GM18951 (cell line): ENCODE measurements at regions of chr1 and their contacts with region 1.

Region 1: DNA sequence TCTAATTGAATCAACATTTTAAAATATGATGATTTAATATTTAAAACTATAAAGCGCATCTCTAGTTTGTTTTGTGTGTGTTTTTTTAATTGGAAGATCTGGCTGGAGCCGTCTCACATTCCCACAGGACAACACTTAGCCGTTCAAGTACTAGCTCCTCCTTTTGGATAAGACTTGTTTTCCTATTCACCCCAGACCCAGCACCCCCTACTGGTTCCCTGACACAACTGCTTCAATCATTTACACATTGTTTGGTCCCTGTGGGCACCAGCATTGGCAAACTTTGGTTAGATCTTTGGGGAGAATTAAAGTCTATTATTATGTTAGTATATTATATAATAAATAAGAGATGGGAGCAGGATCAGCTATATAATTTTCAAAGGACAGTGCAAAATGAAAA is 34.5 kb downstream of the TYW3 start:
- POLR2A ChIP-seq: no peak

Region 2: DNA sequence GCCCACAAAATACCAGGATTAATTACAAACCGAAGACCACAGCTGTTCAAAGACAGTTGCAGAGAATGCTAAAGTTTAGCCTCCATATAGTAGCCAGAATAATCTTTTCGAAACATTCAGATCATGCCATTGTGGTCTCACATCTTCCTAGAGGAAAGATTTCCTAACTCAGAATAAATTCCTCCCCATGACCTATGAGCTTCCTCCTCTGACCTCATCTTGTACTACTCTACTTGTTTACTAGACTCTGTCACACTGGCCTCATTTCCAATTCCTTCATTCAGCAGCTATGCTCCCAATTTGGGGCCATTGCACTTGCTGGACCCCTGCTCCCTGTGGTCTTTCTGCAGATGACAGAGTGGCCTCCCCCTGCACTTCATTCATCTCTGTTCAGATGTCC is 183.3 kb before region 1 on chr1:
- in situ Hi-C with region 1: no loop called
- POLR2A ChIP-seq: no peak

Region 3: DNA sequence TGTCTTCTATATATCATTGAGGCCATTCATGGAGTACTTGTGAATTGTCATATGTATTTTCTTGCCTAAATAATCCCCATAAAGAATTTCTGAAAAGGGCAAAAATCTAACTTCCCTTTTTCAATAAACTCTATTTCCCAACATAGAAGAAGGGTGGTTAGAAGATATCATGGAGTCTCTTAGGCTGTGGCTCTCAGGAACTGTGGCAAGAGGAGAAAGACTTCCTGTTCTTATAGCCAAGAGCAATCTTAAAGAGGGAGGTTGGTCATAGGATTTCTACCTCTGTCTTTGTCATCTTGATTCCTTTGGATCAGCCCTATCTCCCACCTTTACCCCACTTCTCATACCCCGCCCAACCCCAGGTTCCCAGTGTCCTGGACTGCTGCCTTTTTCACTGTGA is 141.3 kb after region 1 on chr1:
- in situ Hi-C with region 1: no loop called
- POLR2A ChIP-seq: no peak

Region 4: DNA sequence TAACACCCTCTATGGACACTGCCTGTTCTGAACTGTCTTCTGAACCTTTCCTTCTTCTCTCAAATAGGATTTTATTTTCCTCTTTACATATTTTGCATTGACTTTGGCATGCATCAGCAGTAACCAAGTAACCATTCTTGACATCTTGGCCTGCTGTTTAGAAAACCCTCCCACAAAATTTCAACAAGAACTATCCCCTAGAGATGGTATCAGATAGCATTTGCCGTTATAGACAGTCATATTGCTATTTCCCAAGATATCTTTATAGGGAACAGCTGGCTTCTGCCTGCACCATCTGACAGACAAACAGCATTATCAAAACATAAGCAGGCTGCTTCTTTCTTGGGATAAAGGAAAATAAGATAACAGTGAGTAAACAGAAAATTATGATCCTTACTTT is 421.4 kb after region 1 on chr1:
- in situ Hi-C with region 1: loop called (anchors 10 kb)
- POLR2A ChIP-seq: no peak